ENCODE measurements at regions of chrX and their contacts with region 1.

Region 1: GRCh38 chrX:74614093-74614909 is at the start of gene RLIM:
- DNase-seq: peak; percentile 83 to 97 (median 88)
- ATAC-seq: peak; percentile 88
- H3K4me3 ChIP-seq: peak within 1 kb of the TSS; percentile 90
- H3K4me3 Mint-ChIP-seq: peak within 1 kb of the TSS; percentile 99
- H3K27ac ChIP-seq: peak within 1 kb of the TSS; percentile 95 to 100
- H3K27ac Mint-ChIP-seq: peak within 1 kb of the TSS; percentile 95
- H3K4me1 ChIP-seq: peaks cover 6% of the 10 kb centered on the region
- H3K4me1 Mint-ChIP-seq: peaks cover 25% of the 10 kb centered on the region
- H3K27me3 ChIP-seq: no peaks in the 10 kb centered on the region
- H3K27me3 Mint-ChIP-seq: no peaks in the 10 kb centered on the region
- CTCF ChIP-seq: no peak
- total RNA-seq, gene RLIM: 71.0 to 73.6 TPM

Region 2: DNA sequence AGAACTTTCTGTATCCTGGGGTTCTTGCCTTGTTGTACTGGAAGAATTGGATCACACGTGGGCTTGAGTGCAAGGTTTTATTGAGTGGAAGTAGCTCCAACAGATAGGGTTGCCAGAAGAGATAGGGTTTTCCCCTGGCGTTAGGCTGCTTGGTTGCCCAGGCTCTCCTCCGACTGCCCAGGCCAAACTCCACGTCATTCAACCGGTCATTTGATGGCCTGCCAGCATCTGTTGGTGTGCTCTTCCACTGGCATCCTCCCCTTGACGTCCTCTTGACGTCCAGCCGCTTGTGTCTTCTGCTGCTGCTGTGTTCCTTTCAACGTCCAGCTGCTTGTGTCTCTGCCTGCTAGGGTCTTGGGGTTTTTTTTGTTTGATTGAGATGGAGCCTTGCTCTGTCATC is 650.6 kb before region 1 on chrX:
- CTCF ChIA-PET with region 1: no interaction called
- POLR2A ChIA-PET with region 1: no interaction called
- intact Hi-C with region 1: no loop called
- DNase-seq: no peak
- ATAC-seq: no peak
- H3K4me3 ChIP-seq: no peak overlapping the region
- H3K4me3 Mint-ChIP-seq: no peak overlapping the region
- H3K27ac ChIP-seq: no peak overlapping the region
- H3K27ac Mint-ChIP-seq: peak overlapping the region; percentile 61
- H3K4me1 ChIP-seq: peaks cover 6% of the 10 kb centered on the region
- H3K4me1 Mint-ChIP-seq: peaks cover 59% of the 10 kb centered on the region
- H3K27me3 ChIP-seq: no peaks in the 10 kb centered on the region
- H3K27me3 Mint-ChIP-seq: no peaks in the 10 kb centered on the region
- CTCF ChIP-seq: no peak

Region 3: DNA sequence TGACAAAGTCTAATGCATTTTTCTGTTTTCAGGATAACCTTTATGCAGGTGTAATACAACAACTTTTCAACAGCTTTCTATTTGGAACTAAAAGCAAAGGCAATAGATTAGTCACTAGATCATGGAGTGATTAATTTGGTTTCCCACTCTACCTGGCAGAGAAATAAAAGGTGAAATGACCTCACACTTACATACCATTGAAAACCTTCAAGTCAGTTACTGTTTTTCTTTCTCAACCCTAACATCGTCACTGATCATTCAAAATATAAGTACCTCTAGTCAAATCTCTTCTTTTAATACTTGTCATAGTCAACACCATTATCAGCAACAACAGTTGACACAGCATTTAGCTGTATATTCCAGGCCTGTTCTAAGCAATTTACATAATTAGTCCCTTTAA is 395.4 kb before region 1 on chrX:
- CTCF ChIA-PET with region 1: no interaction called
- POLR2A ChIA-PET with region 1: no interaction called
- intact Hi-C with region 1: no loop called
- DNase-seq: no peak
- ATAC-seq: no peak
- H3K4me3 ChIP-seq: no peak overlapping the region
- H3K4me3 Mint-ChIP-seq: no peak overlapping the region
- H3K27ac ChIP-seq: no peak overlapping the region
- H3K27ac Mint-ChIP-seq: no peak overlapping the region
- H3K4me1 ChIP-seq: no peaks in the 10 kb centered on the region
- H3K4me1 Mint-ChIP-seq: peaks cover 7% of the 10 kb centered on the region
- H3K27me3 ChIP-seq: no peaks in the 10 kb centered on the region
- H3K27me3 Mint-ChIP-seq: no peaks in the 10 kb centered on the region
- CTCF ChIP-seq: no peak

Region 4: GRCh38 chrX:74551934-74552333 is 62.4 kb before region 1 on chrX:
- CTCF ChIA-PET with region 1: no interaction called
- POLR2A ChIA-PET with region 1: no interaction called
- intact Hi-C with region 1: no loop called
- DNase-seq: no peak
- ATAC-seq: no peak
- H3K4me3 ChIP-seq: no peak overlapping the region
- H3K4me3 Mint-ChIP-seq: no peak overlapping the region
- H3K27ac ChIP-seq: no peak overlapping the region
- H3K27ac Mint-ChIP-seq: no peak overlapping the region
- H3K4me1 ChIP-seq: peaks cover 7% of the 10 kb centered on the region
- H3K4me1 Mint-ChIP-seq: peaks cover 5% of the 10 kb centered on the region
- H3K27me3 ChIP-seq: no peaks in the 10 kb centered on the region
- H3K27me3 Mint-ChIP-seq: no peaks in the 10 kb centered on the region
- CTCF ChIP-seq: no peak

Region 5: DNA sequence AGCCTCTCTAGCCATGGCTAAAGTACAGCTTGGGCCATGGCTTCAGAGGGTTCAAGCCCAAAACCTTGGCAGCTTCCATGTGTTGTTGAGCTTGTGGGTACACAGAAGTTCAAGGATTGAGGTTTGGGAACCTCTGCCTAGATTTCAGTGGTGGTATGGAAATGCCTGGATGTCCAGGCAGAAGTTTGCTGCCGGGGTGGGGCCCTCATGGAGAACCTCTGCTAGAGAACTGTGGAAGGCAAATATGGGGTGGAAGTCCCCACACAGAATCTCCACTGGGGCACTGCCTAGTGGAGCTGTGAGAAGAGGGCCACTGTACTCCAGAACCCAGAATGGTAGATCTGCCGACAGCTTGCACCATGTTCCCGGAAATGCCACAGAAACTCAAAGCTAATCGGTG is 251.4 kb after region 1 on chrX:
- CTCF ChIA-PET with region 1: no interaction called
- POLR2A ChIA-PET with region 1: no interaction called
- intact Hi-C with region 1: no loop called
- DNase-seq: no peak
- ATAC-seq: no peak
- H3K4me3 ChIP-seq: no peak overlapping the region
- H3K4me3 Mint-ChIP-seq: no peak overlapping the region
- H3K27ac ChIP-seq: no peak overlapping the region
- H3K27ac Mint-ChIP-seq: no peak overlapping the region
- H3K4me1 ChIP-seq: no peaks in the 10 kb centered on the region
- H3K4me1 Mint-ChIP-seq: no peaks in the 10 kb centered on the region
- H3K27me3 ChIP-seq: no peaks in the 10 kb centered on the region
- H3K27me3 Mint-ChIP-seq: no peaks in the 10 kb centered on the region
- CTCF ChIP-seq: no peak

Region 6: GRCh38 chrX:75156021-75156945 is 542.0 kb after region 1 on chrX and contains the start of gene ABCB7:
- CTCF ChIA-PET with region 1: no interaction called
- POLR2A ChIA-PET with region 1: interaction called, 5 read pairs
- intact Hi-C with region 1: loop called in 1 of 2 experiments (anchors 10 kb)
- DNase-seq: peak; percentile 38 to 85 (median 57)
- ATAC-seq: peak; percentile 94
- H3K4me3 ChIP-seq: peak within 1 kb of the TSS; percentile 77
- H3K4me3 Mint-ChIP-seq: peak within 1 kb of the TSS; percentile 95
- H3K27ac ChIP-seq: peak within 1 kb of the TSS; percentile 52 to 76
- H3K27ac Mint-ChIP-seq: peak within 1 kb of the TSS; percentile 93
- H3K4me1 ChIP-seq: peaks cover 3% of the 10 kb centered on the region
- H3K4me1 Mint-ChIP-seq: peaks cover 63% of the 10 kb centered on the region
- H3K27me3 ChIP-seq: no peaks in the 10 kb centered on the region
- H3K27me3 Mint-ChIP-seq: no peaks in the 10 kb centered on the region
- CTCF ChIP-seq: no peak
- total RNA-seq, gene ABCB7: 13.4 to 14.5 TPM

Region 7: GRCh38 chrX:75278991-75279390 is 664.7 kb after region 1 on chrX:
- CTCF ChIA-PET with region 1: no interaction called
- POLR2A ChIA-PET with region 1: interaction called, 12 read pairs
- intact Hi-C with region 1: loop called in 1 of 2 experiments (anchors 5 kb)
- DNase-seq: no peak
- ATAC-seq: no peak
- H3K4me3 ChIP-seq: no peak overlapping the region
- H3K4me3 Mint-ChIP-seq: no peak overlapping the region
- H3K27ac ChIP-seq: no peak overlapping the region
- H3K27ac Mint-ChIP-seq: no peak overlapping the region
- H3K4me1 ChIP-seq: peaks cover 8% of the 10 kb centered on the region
- H3K4me1 Mint-ChIP-seq: peaks cover 95% of the 10 kb centered on the region
- H3K27me3 ChIP-seq: no peaks in the 10 kb centered on the region
- H3K27me3 Mint-ChIP-seq: no peaks in the 10 kb centered on the region
- CTCF ChIP-seq: no peak